OCI-LY7 (cell line): ENCODE measurements at regions of chr2 and their contacts with region 1.

Region 1: GRCh38 chr2:204325468-204325867 is 219.8 kb upstream of the PARD3B start:
- DNase-seq: peak; percentile 64
- H3K4me3 ChIP-seq: no peak overlapping the region
- H3K27ac ChIP-seq: no peak overlapping the region
- H3K4me1 ChIP-seq: no peaks in the 10 kb centered on the region
- CTCF ChIP-seq: peak; percentile 96

Region 2: DNA sequence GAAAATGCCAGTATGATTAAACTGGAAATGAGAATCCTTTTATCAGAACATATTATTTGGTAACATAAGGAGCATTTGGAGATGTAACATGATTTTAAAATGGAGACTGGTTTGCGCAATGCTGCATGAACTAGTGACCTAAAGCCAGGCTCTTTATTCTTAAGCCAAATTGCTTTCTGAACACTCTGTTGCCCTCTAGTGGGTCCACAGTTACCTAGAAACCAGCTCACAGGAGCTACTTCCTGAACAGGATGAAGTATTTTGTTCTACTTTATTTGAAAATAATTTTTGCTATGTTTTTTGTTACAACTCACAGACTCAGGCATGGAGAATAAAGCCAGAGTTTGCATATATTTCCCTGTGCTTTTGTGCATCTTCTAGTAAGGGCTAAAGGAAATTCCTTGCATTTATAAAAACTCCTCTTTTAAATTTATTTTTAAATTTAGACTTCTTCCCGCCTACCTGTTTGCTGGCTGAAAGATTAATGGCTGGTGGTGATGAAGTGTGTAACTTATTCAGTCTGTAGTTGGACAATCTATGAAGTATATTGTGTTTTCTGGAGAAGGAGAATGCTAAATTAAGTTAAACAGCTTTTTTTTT is 366.5 kb after region 1 on chr2:
- CTCF ChIA-PET with region 1: no interaction called
- POLR2A ChIA-PET with region 1: no interaction called
- intact Hi-C with region 1: loop called (anchors 5 kb)
- DNase-seq: peak; percentile 51
- H3K4me3 ChIP-seq: no peak overlapping the region
- H3K27ac ChIP-seq: no peak overlapping the region
- H3K4me1 ChIP-seq: no peaks in the 10 kb centered on the region
- CTCF ChIP-seq: peak; percentile 86

Region 3: GRCh38 chr2:204931562-204931961 is 606.1 kb after region 1 on chr2:
- CTCF ChIA-PET with region 1: no interaction called
- POLR2A ChIA-PET with region 1: no interaction called
- intact Hi-C with region 1: no loop called
- DNase-seq: no peak
- H3K4me3 ChIP-seq: no peak overlapping the region
- H3K27ac ChIP-seq: no peak overlapping the region
- H3K4me1 ChIP-seq: no peaks in the 10 kb centered on the region
- CTCF ChIP-seq: no peak

Region 4: DNA sequence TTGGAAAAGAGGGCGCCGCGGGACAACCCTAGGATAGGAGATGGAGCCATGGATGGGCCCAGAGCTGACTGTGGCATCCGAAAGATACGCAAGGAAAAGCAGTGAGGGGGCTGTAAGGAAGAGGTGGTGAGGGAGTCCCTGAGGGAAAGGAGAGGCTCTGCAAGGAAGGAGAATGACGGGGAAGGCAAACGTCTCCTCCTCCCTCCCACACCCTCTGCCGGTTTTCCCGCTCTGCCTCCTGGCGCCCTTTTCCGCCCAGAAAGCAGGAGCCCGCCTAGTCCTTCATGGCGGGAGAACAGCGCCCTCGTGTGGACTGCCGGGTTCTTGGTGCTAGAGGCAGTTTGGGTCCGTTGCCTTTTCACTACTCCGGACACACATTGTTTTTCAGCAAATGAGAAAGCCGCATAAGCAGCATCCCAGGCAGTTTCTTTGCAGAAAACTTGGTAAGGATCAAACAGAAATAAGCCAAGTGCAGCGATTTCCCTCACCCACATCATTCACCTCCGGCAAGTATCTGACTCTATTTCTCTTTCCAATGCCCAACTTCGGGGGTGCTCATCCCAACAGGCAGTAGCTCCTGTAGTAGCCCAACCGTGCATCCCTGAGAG is 1560.1 kb after region 1 on chr2:
- CTCF ChIA-PET with region 1: no interaction called
- POLR2A ChIA-PET with region 1: no interaction called
- intact Hi-C with region 1: loop called (anchors 10 kb)
- DNase-seq: peak; percentile 65
- H3K4me3 ChIP-seq: no peak overlapping the region
- H3K27ac ChIP-seq: no peak overlapping the region
- H3K4me1 ChIP-seq: no peaks in the 10 kb centered on the region
- CTCF ChIP-seq: peak; percentile 87